ENCODE measurements at regions of chr20 and their contacts with region 1.

Region 1: GRCh38 chr20:32674362-32674789 is 635 bp upstream of the C20orf203 start:
- DNase-seq: no peak
- H3K4me3 ChIP-seq: no peak overlapping the region
- H3K27ac ChIP-seq: no peak overlapping the region
- H3K4me1 ChIP-seq: no peaks in the 10 kb centered on the region
- H3K27me3 ChIP-seq: no peaks in the 10 kb centered on the region
- CTCF ChIP-seq: peak in 1 of 3 experiments; percentile 50
- POLR2A ChIP-seq: no peak

Region 2: GRCh38 chr20:32743237-32744112 is 69.1 kb after region 1 on chr20 and contains the start of gene COMMD7:
- intact Hi-C with region 1: no loop called
- DNase-seq: no peak
- H3K4me3 ChIP-seq: peak within 1 kb of the TSS; percentile 75 to 89
- H3K27ac ChIP-seq: peak within 1 kb of the TSS; percentile 86
- H3K4me1 ChIP-seq: peaks cover 21% of the 10 kb centered on the region
- H3K27me3 ChIP-seq: no peaks in the 10 kb centered on the region
- CTCF ChIP-seq: no peak
- POLR2A ChIP-seq: no peak
- total RNA-seq, gene COMMD7: 28.7 TPM

Region 3: GRCh38 chr20:32789896-32790750 is 115.7 kb after region 1 on chr20:
- intact Hi-C with region 1: loop called (anchors 10 kb)
- DNase-seq: no peak
- H3K4me3 ChIP-seq: no peak overlapping the region
- H3K27ac ChIP-seq: no peak overlapping the region
- H3K4me1 ChIP-seq: peaks cover 3% of the 10 kb centered on the region
- H3K27me3 ChIP-seq: no peaks in the 10 kb centered on the region
- CTCF ChIP-seq: peak; percentile 86 to 96 (median 93)
- POLR2A ChIP-seq: no peak

Measured in vagina (tissue), 2 donors.